Heart right ventricle (tissue), 16 donors: ENCODE measurements at regions of chr2 and their contacts with region 1.

Region 1: DNA sequence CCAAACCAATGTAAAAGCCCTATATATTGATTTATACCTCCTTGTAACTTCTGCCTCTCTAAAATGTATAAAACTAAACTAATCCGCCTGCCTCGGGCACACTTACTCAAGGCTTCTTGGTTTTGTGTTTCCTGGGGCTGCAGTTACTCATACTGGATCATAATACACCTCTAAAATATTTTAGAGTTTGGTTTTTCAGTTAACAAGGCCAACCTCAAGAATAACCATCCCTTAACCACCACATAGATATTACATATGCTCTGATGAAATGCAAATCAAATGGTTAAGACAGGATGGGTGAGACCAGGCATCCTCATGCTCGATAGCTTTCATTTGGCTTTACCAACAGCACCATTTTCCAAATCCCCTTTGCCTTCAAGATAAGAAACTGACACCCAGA is 46.4 kb downstream of the UXS1 start:
- DNase-seq: no peak
- ATAC-seq: no peak
- H3K4me3 ChIP-seq: no peak overlapping the region
- H3K27ac ChIP-seq: no peak overlapping the region
- H3K4me1 ChIP-seq: peaks cover 0 to 10% (median 0%) of the 10 kb centered on the region in 9 donors
- H3K27me3 ChIP-seq: no peaks in the 10 kb centered on the region
- CTCF ChIP-seq: no peak

Region 2: GRCh38 chr2:106183101-106183696 is 35.5 kb after region 1 on chr2:
- intact Hi-C with region 1: loop called in 1 of 10 experiments (anchors 2 kb)
- DNase-seq: no peak
- ATAC-seq: peak in 3 of 8 donors; percentile 46 to 59 (median 48)
- H3K4me3 ChIP-seq: peak overlapping the region in 1 of 10 donors; percentile 8
- H3K27ac ChIP-seq: peak overlapping the region in 5 of 10 donors; percentile 11 to 64 (median 26)
- H3K4me1 ChIP-seq: peaks cover 0 to 33% (median 12%) of the 10 kb centered on the region in 9 donors
- H3K27me3 ChIP-seq: no peaks in the 10 kb centered on the region
- CTCF ChIP-seq: no peak